ENCODE measurements at regions of chr17 and their contacts with region 1.

Region 1: GRCh38 chr17:49779739-49780231 is 8.7 kb upstream of the KAT7 start:
- DNase-seq: peak in 4 of 5 donors; percentile 17 to 40 (median 35)
- H3K4me3 ChIP-seq: no peak overlapping the region
- H3K4me3 Mint-ChIP-seq: no peak overlapping the region
- H3K27ac ChIP-seq: no peak overlapping the region
- H3K27ac Mint-ChIP-seq: peak overlapping the region in 2 of 7 donors; percentile 35 to 57
- H3K4me1 ChIP-seq: peaks cover 7% of the 10 kb centered on the region
- H3K4me1 Mint-ChIP-seq: peaks cover 3 to 15% (median 3%) of the 10 kb centered on the region in 4 donors
- H3K27me3 ChIP-seq: no peaks in the 10 kb centered on the region
- H3K27me3 Mint-ChIP-seq: no peaks in the 10 kb centered on the region

Region 2: GRCh38 chr17:49567871-49568694 is 211.7 kb before region 1 on chr17:
- CTCF ChIA-PET with region 1: interaction called, 5 read pairs
- POLR2A ChIA-PET with region 1: no interaction called
- intact Hi-C with region 1: loop called (anchors 1 kb)
- DNase-seq: peak; percentile 68 to 77 (median 74)
- H3K4me3 ChIP-seq: peak overlapping the region in 1 of 2 donors; percentile 56
- H3K4me3 Mint-ChIP-seq: peak overlapping the region; percentile 28 to 82 (median 60)
- H3K27ac ChIP-seq: no peak overlapping the region
- H3K27ac Mint-ChIP-seq: peak overlapping the region in 2 of 7 donors; percentile 46 to 54
- H3K4me1 ChIP-seq: peaks cover 10% of the 10 kb centered on the region
- H3K4me1 Mint-ChIP-seq: peaks cover 8 to 29% (median 19%) of the 10 kb centered on the region in 4 donors
- H3K27me3 ChIP-seq: no peaks in the 10 kb centered on the region
- H3K27me3 Mint-ChIP-seq: peaks cover 6 to 11% of the 10 kb centered on the region in 2 donors

Region 3: DNA sequence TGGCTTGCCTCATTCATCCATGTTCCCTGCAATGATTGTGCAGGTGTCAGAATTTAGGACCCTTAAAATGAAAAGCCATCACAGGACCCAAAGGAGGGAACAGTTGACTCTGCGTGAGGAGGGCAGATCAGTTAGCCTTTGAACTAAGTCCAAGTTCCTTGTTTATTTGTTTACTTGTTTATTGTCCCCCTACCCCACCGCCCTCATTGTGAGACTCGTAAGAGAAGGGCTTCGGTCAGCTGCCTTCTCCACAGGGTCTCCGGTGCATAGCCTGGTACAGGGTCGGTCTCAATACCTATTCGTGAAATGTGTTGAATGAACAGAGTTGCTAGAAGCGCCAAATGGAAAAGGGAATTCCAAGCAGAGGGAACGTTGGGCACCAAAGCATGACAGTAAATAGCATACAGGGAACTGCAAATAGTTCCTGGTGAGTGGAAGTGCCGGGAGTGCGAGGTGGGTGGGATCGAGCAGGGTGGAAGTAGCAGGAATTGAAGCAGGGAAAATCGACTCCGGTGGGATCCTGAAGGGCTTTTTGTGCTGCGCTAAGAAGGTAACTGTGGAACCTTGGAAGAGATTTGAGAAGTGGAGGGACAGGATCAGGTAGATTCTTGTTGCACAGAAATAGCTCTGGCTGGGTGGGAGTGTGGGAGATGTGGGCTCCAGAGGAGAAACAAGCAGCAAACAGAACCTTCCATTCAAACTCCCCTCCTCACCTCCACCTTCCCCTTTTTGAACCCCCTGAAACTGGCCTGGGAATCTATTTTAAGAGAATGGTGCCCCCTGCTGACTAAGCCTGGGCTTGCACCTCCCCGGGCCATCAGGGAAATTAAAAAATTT is 84.7 kb before region 1 on chr17:
- CTCF ChIA-PET with region 1: interaction called, 16 read pairs
- POLR2A ChIA-PET with region 1: interaction called, 3 read pairs
- intact Hi-C with region 1: no loop called
- DNase-seq: peak; percentile 52 to 70 (median 61)
- H3K4me3 ChIP-seq: no peak overlapping the region
- H3K4me3 Mint-ChIP-seq: peak overlapping the region in 3 of 8 donors; percentile 1 to 41 (median 4)
- H3K27ac ChIP-seq: no peak overlapping the region
- H3K27ac Mint-ChIP-seq: peak overlapping the region; percentile 65 to 90 (median 83)
- H3K4me1 ChIP-seq: peaks cover 19% of the 10 kb centered on the region
- H3K4me1 Mint-ChIP-seq: peaks cover 22 to 51% (median 30%) of the 10 kb centered on the region in 4 donors
- H3K27me3 ChIP-seq: no peaks in the 10 kb centered on the region
- H3K27me3 Mint-ChIP-seq: no peaks in the 10 kb centered on the region

Region 4: GRCh38 chr17:49715717-49716279 is 64.0 kb before region 1 on chr17:
- CTCF ChIA-PET with region 1: interaction called, 56 read pairs
- POLR2A ChIA-PET with region 1: interaction called, 5 read pairs
- intact Hi-C with region 1: loop called (anchors 2 kb)
- DNase-seq: peak; percentile 77 to 89 (median 84)
- H3K4me3 ChIP-seq: peak overlapping the region in 1 of 2 donors; percentile 1
- H3K4me3 Mint-ChIP-seq: peak overlapping the region; percentile 52 to 85 (median 60)
- H3K27ac ChIP-seq: peak overlapping the region; percentile 78
- H3K27ac Mint-ChIP-seq: peak overlapping the region; percentile 92 to 99 (median 98)
- H3K4me1 ChIP-seq: peaks cover 46% of the 10 kb centered on the region
- H3K4me1 Mint-ChIP-seq: peaks cover 37 to 53% (median 44%) of the 10 kb centered on the region in 4 donors
- H3K27me3 ChIP-seq: no peaks in the 10 kb centered on the region
- H3K27me3 Mint-ChIP-seq: peaks cover 0 to 2% of the 10 kb centered on the region in 2 donors

Region 5: DNA sequence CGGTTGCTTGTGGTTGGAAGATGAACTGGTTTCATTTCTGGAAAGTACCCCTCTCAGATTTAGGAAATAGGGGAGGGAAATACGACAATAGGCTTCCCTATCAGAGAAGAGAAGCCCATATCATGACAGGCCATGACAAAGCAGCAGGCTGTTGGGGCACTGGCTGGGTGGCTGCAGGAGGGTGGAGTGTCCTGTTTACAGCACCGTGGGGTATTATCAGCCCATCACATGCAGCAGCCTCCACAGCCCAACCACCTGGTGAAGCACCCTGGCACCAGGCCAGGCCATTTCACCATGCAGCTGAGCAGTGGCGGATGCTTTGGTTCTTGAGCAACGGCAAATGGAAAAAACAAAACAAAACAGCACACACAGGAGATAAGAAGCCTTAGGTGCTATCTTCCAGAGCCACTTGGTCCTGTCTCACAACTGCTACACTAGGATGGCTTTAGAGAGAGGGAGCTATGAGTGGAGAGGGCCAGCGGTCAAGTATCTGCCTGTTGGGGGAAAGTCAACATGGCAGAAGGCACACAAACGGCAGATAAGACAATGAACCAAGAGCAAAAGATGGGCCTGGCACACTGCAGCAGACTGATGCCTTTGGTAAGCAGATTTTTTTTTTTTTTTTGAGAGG is 40.0 kb before region 1 on chr17:
- CTCF ChIA-PET with region 1: no interaction called
- POLR2A ChIA-PET with region 1: interaction called, 75 read pairs
- intact Hi-C with region 1: loop called (anchors 1 kb)
- DNase-seq: peak; percentile 96 to 100 (median 99)
- H3K4me3 ChIP-seq: peak overlapping the region; percentile 32 to 80
- H3K4me3 Mint-ChIP-seq: peak overlapping the region; percentile 93 to 99 (median 97)
- H3K27ac ChIP-seq: peak overlapping the region; percentile 99
- H3K27ac Mint-ChIP-seq: peak overlapping the region; percentile 99 to 100 (median 100)
- H3K4me1 ChIP-seq: peaks cover 97% of the 10 kb centered on the region
- H3K4me1 Mint-ChIP-seq: peaks cover 68 to 94% (median 78%) of the 10 kb centered on the region in 4 donors
- H3K27me3 ChIP-seq: no peaks in the 10 kb centered on the region
- H3K27me3 Mint-ChIP-seq: no peaks in the 10 kb centered on the region

Region 6: GRCh38 chr17:49748791-49749190 is 31.0 kb before region 1 on chr17:
- CTCF ChIA-PET with region 1: interaction called, 17 read pairs
- POLR2A ChIA-PET with region 1: interaction called, 75 read pairs
- intact Hi-C with region 1: no loop called
- DNase-seq: peak; percentile 74 to 91 (median 80)
- H3K4me3 ChIP-seq: peak overlapping the region in 1 of 2 donors; percentile 27
- H3K4me3 Mint-ChIP-seq: peak overlapping the region; percentile 38 to 90 (median 80)
- H3K27ac ChIP-seq: peak overlapping the region; percentile 89
- H3K27ac Mint-ChIP-seq: peak overlapping the region; percentile 94 to 99 (median 97)
- H3K4me1 ChIP-seq: peaks cover 97% of the 10 kb centered on the region
- H3K4me1 Mint-ChIP-seq: peaks cover 56 to 91% (median 76%) of the 10 kb centered on the region in 4 donors
- H3K27me3 ChIP-seq: no peaks in the 10 kb centered on the region
- H3K27me3 Mint-ChIP-seq: no peaks in the 10 kb centered on the region

Region 7: DNA sequence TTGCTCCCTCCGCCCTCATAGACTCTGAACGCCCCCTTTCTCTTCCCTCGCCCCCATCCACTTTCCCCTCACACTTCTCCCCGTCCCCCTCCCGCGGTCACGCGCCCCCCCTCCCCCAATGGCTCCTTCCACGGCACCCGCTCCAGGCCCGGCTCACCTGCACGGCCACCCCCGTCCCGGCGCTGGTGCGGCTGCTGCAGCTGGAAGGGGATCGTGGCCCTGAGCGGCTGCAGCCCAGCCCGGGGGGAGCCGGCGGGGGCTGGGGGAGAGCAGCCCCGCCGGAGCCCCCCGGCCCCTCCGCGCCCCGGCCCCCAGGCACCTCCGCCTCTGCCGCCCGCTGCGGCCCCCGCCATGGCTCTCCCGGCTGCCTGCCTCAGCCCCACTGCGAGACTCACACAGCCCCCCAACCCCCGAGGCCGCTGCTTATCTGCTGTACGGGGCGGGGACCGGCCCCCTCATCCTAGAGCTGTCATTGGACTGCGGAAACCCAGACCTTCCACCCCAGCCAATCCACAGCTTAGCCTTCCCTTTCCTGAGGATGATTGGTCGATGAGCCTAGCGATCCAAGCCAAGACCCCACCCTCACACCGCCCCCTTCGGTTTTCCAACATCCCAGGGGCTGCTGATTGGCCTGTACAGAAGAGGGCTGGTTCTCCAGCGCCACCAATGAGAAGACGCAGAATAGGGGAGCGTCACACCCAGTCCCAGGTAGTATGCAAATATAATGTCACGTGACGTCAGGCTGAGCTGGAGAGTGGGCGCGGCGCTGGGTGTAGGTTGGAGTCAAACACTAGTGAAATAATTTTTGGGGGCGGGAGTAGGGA is 15.8 kb before region 1 on chr17 and contains the start of gene FAM117A:
- CTCF ChIA-PET with region 1: interaction called, 9 read pairs
- POLR2A ChIA-PET with region 1: interaction called, 26 read pairs
- intact Hi-C with region 1: no loop called
- DNase-seq: peak; percentile 97 to 100 (median 98)
- H3K4me3 ChIP-seq: peak within 1 kb of the TSS; percentile 38 to 70
- H3K4me3 Mint-ChIP-seq: peak within 1 kb of the TSS; percentile 92 to 98 (median 96)
- H3K27ac ChIP-seq: peak within 1 kb of the TSS; percentile 71
- H3K27ac Mint-ChIP-seq: peak within 1 kb of the TSS; percentile 89 to 98 (median 94)
- H3K4me1 ChIP-seq: peaks cover 46% of the 10 kb centered on the region
- H3K4me1 Mint-ChIP-seq: peaks cover 40 to 60% (median 45%) of the 10 kb centered on the region in 4 donors
- H3K27me3 ChIP-seq: no peaks in the 10 kb centered on the region
- H3K27me3 Mint-ChIP-seq: no peaks in the 10 kb centered on the region
- total RNA-seq, gene FAM117A: 95.1 to 102 TPM

Region 8: GRCh38 chr17:49880291-49881053 is 100.7 kb after region 1 on chr17:
- CTCF ChIA-PET with region 1: no interaction called
- POLR2A ChIA-PET with region 1: no interaction called
- intact Hi-C with region 1: no loop called
- DNase-seq: peak; percentile 56 to 70 (median 64)
- H3K4me3 ChIP-seq: no peak overlapping the region
- H3K4me3 Mint-ChIP-seq: peak overlapping the region in 4 of 8 donors; percentile 22 to 52 (median 42)
- H3K27ac ChIP-seq: no peak overlapping the region
- H3K27ac Mint-ChIP-seq: no peak overlapping the region
- H3K4me1 ChIP-seq: peaks cover 10% of the 10 kb centered on the region
- H3K4me1 Mint-ChIP-seq: peaks cover 0 to 7% (median 1%) of the 10 kb centered on the region in 4 donors
- H3K27me3 ChIP-seq: peaks cover 18% of the 10 kb centered on the region
- H3K27me3 Mint-ChIP-seq: peaks cover 25 to 40% of the 10 kb centered on the region in 2 donors